ENCODE measurements at regions of chr2 and their contacts with region 1.

Region 1: DNA sequence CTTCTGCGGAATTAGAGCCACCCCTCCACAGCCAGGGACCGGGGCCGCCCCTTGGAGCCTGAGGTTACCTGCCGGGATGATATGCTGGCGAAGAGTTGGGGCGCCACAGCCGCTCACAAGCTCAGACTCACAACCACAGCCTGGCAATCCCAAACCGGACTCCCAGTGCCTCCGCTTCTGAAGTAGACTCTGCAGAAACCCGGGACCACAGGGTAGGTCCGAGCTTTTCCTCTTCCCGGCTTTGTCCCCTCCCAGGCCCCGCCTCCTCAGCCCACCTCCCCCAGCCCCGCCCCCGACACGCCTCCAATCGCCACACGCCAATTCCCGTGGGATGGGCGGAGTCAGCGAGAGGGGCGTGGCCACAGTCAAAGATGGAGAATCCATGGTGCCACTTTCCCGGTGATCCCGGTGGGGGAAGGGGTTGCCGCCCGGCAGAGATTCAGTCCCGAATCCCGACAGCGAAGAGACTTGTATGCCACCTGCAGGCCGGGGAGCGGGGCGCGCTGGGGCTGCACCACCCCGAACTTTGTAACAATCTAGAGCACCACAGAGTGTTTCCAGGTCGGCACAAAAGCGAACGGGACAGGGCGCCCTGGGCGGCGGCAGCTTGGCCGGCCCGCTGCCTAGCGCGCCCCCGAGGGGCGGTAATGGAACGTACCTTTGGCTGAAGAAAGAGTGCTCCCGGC is at the start of gene IDH1:
- DNase-seq: peak; percentile 95
- H3K4me3 ChIP-seq: peak within 1 kb of the TSS; percentile 74 to 99 (median 99)
- H3K27ac ChIP-seq: peak within 1 kb of the TSS; percentile 50
- H3K4me1 ChIP-seq: peaks cover 24% of the 10 kb centered on the region
- H3K27me3 ChIP-seq: no peaks in the 10 kb centered on the region
- CTCF ChIP-seq: peak; percentile 52 to 74
- POLR2A ChIP-seq: peak; percentile 58
- total RNA-seq, gene IDH1: 107 and 124 TPM in 2 replicates

Region 2: DNA sequence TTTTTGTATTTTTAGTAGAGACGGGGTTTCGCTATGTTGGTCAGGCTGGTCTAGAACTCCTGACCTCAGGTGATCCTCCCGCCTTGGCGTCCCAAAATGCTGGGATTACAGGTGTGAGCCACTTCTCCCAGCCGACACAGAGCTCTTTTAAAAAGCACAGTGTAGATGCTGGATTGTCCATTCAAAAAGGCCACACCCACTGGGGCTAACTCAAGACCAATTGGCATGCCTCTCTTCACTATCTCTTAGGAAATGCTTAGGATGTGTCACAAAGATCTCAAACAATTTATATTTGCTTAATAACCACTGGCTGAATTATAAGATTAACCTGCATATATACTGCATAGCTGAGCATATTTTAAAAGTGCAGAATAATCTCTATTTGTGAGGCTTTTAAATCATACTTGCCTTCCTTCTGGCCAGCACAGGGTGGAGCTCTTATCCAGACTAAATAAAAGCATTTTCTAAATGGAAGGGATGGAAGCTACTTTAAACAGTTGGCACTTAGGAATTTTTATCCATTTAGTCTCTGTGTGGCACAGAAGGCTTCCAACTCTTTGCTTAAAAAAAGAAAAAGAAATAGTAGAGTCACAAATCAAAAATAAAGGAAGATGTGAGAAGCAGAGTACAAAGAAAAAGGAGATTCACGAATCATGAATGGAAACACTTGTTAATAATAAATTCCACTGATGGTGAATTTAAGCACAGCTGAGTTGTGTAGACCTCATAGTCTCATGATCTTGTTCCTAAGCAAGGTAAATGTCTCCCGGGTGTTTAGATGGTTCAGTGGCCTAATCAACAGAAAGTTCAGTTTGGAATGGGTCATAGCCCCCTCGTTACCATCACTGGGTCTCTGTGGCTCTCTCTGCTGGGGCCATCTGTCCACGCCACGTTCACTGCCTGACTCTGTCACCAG is 153.0 kb before region 1 on chr2:
- CTCF ChIA-PET with region 1: interaction called, 5 read pairs
- POLR2A ChIA-PET with region 1: no interaction called
- dilution Hi-C with region 1: no loop called
- intact Hi-C with region 1: loop called (anchors 1 kb)
- DNase-seq: peak; percentile 22
- H3K4me3 ChIP-seq: no peak overlapping the region
- H3K27ac ChIP-seq: no peak overlapping the region
- H3K4me1 ChIP-seq: no peaks in the 10 kb centered on the region
- H3K27me3 ChIP-seq: peaks cover 0 to 3% of the 10 kb centered on the region in 2 experiments
- CTCF ChIP-seq: no peak
- POLR2A ChIP-seq: no peak

Region 3: GRCh38 chr2:208265801-208266552 is 11.0 kb after region 1 on chr2 and contains the start of gene PIKFYVE:
- CTCF ChIA-PET with region 1: interaction called, 62 read pairs
- POLR2A ChIA-PET with region 1: interaction called, 8 read pairs
- dilution Hi-C with region 1: no loop called
- intact Hi-C with region 1: loop called (anchors 1 kb)
- DNase-seq: peak; percentile 97
- H3K4me3 ChIP-seq: peak within 1 kb of the TSS; percentile 92 to 94 (median 94)
- H3K27ac ChIP-seq: peak within 1 kb of the TSS; percentile 85
- H3K4me1 ChIP-seq: peaks cover 24% of the 10 kb centered on the region
- H3K27me3 ChIP-seq: no peaks in the 10 kb centered on the region
- CTCF ChIP-seq: no peak
- POLR2A ChIP-seq: peak; percentile 78
- total RNA-seq, gene PIKFYVE: 28.2 and 28.5 TPM in 2 replicates